ENCODE measurements at regions of chr11 and their contacts with region 1.

Region 1: DNA sequence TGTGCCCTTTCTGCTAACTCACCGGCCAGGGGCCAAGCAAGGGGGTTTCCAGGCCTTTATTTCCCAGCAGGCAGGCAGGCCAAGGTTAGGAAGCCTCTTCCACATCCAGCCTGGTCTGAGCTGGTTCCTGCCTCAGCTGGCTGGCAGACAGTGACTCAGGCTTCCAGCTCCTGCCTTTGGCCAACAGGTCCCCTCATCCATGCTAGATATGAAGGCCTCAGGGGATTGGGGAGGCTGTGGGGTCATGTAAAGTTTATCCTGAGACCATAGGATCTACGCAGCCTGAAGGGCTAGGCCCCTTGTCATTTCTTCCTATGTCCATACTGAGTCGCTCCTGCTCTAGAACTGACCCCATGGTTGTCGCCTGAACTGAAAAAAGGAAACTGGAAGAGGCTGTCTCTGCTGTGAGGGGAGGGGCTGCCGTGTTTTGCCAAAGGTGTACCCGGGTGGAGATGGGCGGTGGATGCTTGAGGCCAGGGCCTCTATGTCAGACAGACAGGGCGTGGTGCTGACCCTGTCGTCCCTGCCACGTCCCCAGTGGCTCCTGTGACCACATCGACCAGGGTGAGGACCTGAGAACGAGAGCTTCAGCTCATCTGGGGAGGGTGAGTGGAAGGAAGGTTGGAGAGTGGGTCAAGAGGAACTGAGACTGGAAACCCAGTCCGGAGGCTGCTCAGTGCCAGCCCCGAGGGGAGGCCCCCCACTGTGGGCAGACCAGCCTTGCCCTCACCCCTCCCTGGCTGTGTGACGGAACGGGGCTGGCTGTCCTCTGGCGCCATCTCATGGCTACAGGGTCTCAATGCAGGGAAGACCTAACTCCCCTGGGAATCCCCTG is 17.0 kb downstream of the P2RY6 start:
- DNase-seq: peak; percentile 92
- H3K4me3 ChIP-seq: peak overlapping the region in 1 of 2 experiments; percentile 25; a peak in 1 of 4 replicates
- H3K27ac ChIP-seq: peak overlapping the region; percentile 35 to 48
- H3K4me1 ChIP-seq: peaks cover 9 to 29% of the 10 kb centered on the region in 2 experiments
- H3K27me3 ChIP-seq: no peaks in the 10 kb centered on the region
- CTCF ChIP-seq: peak; percentile 95
- EP300 ChIP-seq: no peak
- RAD21 ChIP-seq: peak; percentile 97

Region 2: DNA sequence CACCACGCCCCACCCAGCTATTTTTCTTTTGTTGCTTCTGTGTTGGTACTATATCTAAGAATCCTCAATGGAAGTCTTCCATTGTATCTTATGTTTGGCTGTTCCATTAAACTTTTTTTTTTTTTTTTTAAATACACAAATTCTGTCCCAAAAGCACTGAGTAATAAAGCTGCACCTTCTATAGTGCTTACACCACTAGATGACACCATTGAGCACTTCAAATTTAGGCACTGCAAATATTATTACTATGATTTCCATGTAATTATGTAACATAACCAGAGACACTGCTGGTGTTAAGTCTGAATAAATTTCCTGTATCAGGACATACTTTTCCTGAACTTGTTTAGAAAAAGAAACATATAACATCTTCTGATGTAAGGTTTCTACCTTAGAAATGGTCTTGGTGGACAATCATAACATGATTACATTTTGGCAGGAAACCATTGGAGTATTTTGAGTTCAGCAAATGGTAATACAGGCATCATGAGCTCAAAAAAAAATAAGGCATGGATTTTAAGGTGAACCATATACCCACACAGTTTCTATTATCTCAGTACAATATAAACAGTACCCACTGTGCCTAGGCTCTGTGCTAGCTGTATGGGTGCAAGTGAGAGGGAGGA is 364.4 kb before region 1 on chr11:
- CTCF ChIA-PET with region 1: interaction called, 10 read pairs
- POLR2A ChIA-PET with region 1: no interaction called
- DNase-seq: peak; percentile 22
- H3K4me3 ChIP-seq: no peak overlapping the region
- H3K27ac ChIP-seq: no peak overlapping the region
- H3K4me1 ChIP-seq: no peaks in the 10 kb centered on the region; a peak in 1 of 4 replicates
- H3K27me3 ChIP-seq: no peaks in the 10 kb centered on the region
- CTCF ChIP-seq: peak; percentile 61
- EP300 ChIP-seq: no peak
- RAD21 ChIP-seq: peak; percentile 69

Region 3: DNA sequence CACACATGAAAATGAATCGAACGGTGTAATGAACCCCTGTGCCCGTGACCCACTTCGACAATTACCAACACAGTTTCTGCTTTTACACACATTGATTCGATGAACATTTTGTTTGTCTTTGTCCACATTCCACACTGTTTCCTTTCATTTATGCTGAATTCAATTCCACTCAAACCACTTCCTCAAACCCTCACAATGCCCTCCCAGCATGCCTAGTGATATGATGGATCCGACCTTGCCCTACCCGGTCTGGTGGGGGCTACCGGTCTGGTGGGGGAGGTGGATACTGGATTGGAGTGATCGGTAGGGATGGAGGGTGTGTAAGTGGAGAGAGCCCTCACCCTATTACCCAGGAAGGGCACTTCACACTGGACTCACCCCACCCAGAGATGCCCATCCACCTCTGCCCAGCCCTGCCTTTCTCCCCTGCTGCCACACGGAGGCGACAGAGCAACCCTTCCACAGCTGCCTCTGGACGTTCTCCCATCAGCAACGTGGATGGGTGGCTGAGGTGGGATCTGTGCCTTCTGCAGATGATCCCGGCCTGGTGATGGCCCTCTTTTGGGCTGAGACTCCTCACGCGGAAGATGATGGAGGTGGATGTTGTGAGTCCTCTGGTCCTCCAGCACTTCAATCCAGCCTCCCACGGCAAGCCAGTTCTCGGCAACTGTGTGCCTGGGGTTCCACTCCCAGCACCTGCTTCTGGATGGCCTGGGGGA is 104.0 kb before region 1 on chr11:
- CTCF ChIA-PET with region 1: interaction called, 109 read pairs
- POLR2A ChIA-PET with region 1: no interaction called
- DNase-seq: peak; percentile 77
- H3K4me3 ChIP-seq: no peak overlapping the region; a peak in 1 of 4 replicates
- H3K27ac ChIP-seq: no peak overlapping the region
- H3K4me1 ChIP-seq: peaks cover 0 to 12% of the 10 kb centered on the region in 2 experiments; a peak in 3 of 4 replicates
- H3K27me3 ChIP-seq: no peaks in the 10 kb centered on the region
- CTCF ChIP-seq: peak; percentile 71
- EP300 ChIP-seq: no peak
- RAD21 ChIP-seq: peak; percentile 74

Region 4: DNA sequence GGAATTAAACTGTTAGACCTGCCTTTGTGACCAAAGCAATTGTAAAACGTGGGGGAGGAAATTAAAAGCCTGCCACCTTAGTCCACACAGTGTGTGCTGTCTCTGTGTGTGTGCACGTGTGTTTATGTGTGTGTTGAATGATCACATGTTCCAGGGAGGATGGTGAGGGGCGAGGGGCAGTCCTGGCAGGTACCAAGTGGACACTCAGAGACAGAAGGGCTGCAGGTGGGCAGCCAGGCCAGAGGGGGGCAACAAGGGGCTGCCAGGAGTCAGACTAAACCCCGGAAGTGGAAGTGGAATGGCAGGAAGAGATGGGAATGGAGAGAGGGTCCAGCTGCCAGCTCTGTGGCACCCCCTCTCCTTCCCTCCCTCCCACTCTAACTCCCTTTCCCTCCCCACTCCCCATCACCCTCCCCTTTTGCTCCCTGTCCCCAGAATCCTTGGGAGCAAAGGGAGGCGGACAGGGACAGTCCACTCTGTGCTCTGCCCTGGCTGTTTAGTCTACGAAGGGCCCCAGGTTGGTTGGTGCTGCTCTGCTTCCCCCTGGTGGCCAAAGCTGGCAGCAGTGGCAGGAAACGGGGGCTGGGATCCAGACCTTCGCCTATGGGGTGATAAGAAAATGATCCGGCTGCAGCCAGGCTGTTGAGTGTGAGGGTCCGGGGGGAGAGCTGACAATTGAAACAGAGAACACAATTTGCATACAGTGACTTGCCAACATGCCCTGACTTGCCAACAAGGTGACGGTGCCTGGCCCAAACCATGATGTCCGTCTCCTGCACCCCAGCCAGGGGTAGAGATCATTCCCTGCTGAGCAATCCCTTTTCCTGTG is 46.6 kb before region 1 on chr11:
- CTCF ChIA-PET with region 1: interaction called, 283 read pairs
- POLR2A ChIA-PET with region 1: interaction called, 8 read pairs
- DNase-seq: peak; percentile 88
- H3K4me3 ChIP-seq: peak overlapping the region; percentile 20 to 35; a peak in 3 of 4 replicates
- H3K27ac ChIP-seq: peak overlapping the region; percentile 8 to 64; a peak in 2 of 4 replicates
- H3K4me1 ChIP-seq: peaks cover 0 to 27% of the 10 kb centered on the region in 2 experiments; a peak in 2 of 4 replicates
- H3K27me3 ChIP-seq: no peaks in the 10 kb centered on the region
- CTCF ChIP-seq: peak; percentile 95
- EP300 ChIP-seq: no peak
- RAD21 ChIP-seq: peak; percentile 78

Region 5: DNA sequence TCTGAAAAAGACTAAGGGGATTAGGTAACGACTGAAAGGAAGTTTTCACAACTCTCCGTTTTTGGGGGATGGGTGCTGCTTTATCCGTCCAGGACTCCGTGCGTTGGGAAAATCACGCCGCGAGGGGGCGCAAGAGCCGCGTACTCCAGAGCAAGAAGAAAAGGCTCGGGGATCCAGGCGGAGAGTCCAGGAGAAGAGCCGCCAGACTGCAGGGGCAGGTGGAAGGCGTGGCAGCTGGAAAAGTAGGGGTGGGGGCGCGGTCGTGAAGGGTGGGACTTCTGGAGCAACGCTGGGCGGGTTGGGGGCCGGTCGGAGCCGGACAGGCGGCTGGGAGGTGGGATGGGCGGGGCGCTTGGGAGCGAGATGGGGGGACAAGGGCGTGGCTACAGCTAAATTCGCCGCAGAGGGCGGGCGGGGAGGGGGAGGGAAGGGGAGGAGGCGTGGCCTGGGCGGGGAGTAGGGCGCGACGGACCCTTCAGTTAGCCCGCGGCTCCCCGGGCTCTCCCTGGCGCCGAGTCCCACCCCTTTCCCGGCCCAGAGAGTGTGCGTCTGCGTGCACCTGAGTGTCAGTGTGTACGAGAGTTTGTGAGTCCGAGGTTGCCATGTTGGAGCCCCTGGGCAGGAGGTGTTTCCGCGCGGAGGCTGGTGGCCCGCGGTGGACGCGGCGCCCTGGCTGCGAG is 18.4 kb after region 1 on chr11:
- CTCF ChIA-PET with region 1: interaction called, 159 read pairs
- POLR2A ChIA-PET with region 1: no interaction called
- DNase-seq: peak; percentile 97
- H3K4me3 ChIP-seq: peak overlapping the region; percentile 76 to 86
- H3K27ac ChIP-seq: peak overlapping the region; percentile 93 to 97
- H3K4me1 ChIP-seq: peaks cover 35 to 40% of the 10 kb centered on the region in 2 experiments
- H3K27me3 ChIP-seq: no peaks in the 10 kb centered on the region
- CTCF ChIP-seq: peak; percentile 90
- EP300 ChIP-seq: peak in 1 of 2 experiments; percentile 39; a peak in 1 of 4 replicates
- RAD21 ChIP-seq: peak; percentile 96

Region 6: DNA sequence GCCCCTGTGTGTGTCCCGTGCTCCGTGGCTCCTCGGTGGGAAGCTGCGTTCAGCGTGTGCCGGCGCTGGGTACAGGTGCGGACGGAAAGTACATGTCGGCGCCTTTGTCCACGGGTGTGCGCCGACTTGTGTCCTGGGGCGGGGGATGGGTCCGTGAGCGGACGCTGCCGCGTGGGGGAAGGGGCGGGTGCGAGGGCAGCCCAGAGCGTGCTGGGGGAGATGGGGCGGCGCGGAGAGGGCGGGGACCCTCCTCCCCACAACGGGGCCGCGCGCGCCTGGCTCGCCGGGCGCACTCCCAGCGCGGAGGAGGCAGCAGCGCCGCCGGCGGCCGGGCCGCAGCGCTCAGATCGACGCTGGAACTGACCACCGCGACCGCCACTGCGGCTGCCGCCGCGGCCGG is 53.5 kb after region 1 on chr11:
- CTCF ChIA-PET with region 1: interaction called, 132 read pairs
- POLR2A ChIA-PET with region 1: no interaction called
- DNase-seq: peak; percentile 86
- H3K4me3 ChIP-seq: peak overlapping the region in 1 of 2 experiments; percentile 6; a peak in 1 of 4 replicates
- H3K27ac ChIP-seq: no peak overlapping the region
- H3K4me1 ChIP-seq: peaks cover 0 to 44% of the 10 kb centered on the region in 2 experiments; a peak in 1 of 4 replicates
- H3K27me3 ChIP-seq: no peaks in the 10 kb centered on the region
- CTCF ChIP-seq: no peak
- EP300 ChIP-seq: no peak
- RAD21 ChIP-seq: no peak

Region 7: GRCh38 chr11:73570415-73571114 is 281.5 kb after region 1 on chr11:
- CTCF ChIA-PET with region 1: no interaction called
- POLR2A ChIA-PET with region 1: no interaction called
- DNase-seq: no peak
- H3K4me3 ChIP-seq: no peak overlapping the region
- H3K27ac ChIP-seq: peak overlapping the region in 1 of 2 experiments; percentile 75; a peak in 2 of 4 replicates
- H3K4me1 ChIP-seq: peaks cover 12 to 16% of the 10 kb centered on the region in 2 experiments; a peak in 3 of 4 replicates
- H3K27me3 ChIP-seq: no peaks in the 10 kb centered on the region
- CTCF ChIP-seq: no peak
- EP300 ChIP-seq: no peak
- RAD21 ChIP-seq: no peak